PC-9 (cell line): ENCODE measurements at regions of chr15 and their contacts with region 1.

Region 1: DNA sequence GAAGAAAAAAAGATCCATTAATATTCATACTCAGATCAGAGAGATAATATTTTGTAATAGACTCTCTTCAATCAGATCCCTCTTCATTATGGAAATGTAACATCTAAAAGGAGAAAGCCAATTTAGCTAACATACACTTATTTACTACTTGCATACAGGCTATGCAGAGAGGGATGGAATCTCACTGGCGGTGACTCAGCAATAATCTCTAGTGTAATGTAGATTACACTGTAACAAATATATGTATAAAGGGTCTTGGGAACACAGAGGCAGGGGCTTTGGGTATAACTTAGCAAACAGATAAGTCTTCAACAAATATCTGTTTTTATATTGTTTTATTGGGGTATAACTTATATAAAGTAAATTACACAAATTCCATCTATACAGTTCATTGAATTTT is 69.6 kb downstream of the CGNL1 start:
- DNase-seq: no peak
- H3K4me3 ChIP-seq: no peak overlapping the region
- H3K27ac ChIP-seq: peak overlapping the region; percentile 42
- H3K4me1 ChIP-seq: peaks cover 13% of the 10 kb centered on the region
- H3K27me3 ChIP-seq: no peaks in the 10 kb centered on the region
- CTCF ChIP-seq: no peak

Region 2: GRCh38 chr15:57138349-57138788 is 307.5 kb before region 1 on chr15:
- CTCF ChIA-PET with region 1: no interaction called
- POLR2A ChIA-PET with region 1: no interaction called
- intact Hi-C with region 1: no loop called
- DNase-seq: peak in 1 of 2 experiments; percentile 9
- H3K4me3 ChIP-seq: no peak overlapping the region
- H3K27ac ChIP-seq: no peak overlapping the region
- H3K4me1 ChIP-seq: no peaks in the 10 kb centered on the region
- H3K27me3 ChIP-seq: no peaks in the 10 kb centered on the region
- CTCF ChIP-seq: peak; percentile 74

Region 3: GRCh38 chr15:57385923-57386390 is 59.9 kb before region 1 on chr15:
- CTCF ChIA-PET with region 1: interaction called, 3 read pairs
- POLR2A ChIA-PET with region 1: interaction called, 13 read pairs
- intact Hi-C with region 1: no loop called
- DNase-seq: no peak
- H3K4me3 ChIP-seq: no peak overlapping the region
- H3K27ac ChIP-seq: no peak overlapping the region
- H3K4me1 ChIP-seq: no peaks in the 10 kb centered on the region
- H3K27me3 ChIP-seq: no peaks in the 10 kb centered on the region
- CTCF ChIP-seq: no peak

Region 4: GRCh38 chr15:57495041-57495440 is 49.2 kb after region 1 on chr15:
- CTCF ChIA-PET with region 1: no interaction called
- POLR2A ChIA-PET with region 1: interaction called, 17 read pairs
- intact Hi-C with region 1: loop called (anchors 10 kb)
- DNase-seq: no peak
- H3K4me3 ChIP-seq: no peak overlapping the region
- H3K27ac ChIP-seq: no peak overlapping the region
- H3K4me1 ChIP-seq: no peaks in the 10 kb centered on the region
- H3K27me3 ChIP-seq: no peaks in the 10 kb centered on the region
- CTCF ChIP-seq: no peak

Region 5: GRCh38 chr15:57890351-57890750 is 444.5 kb after region 1 on chr15:
- CTCF ChIA-PET with region 1: no interaction called
- POLR2A ChIA-PET with region 1: no interaction called
- intact Hi-C with region 1: no loop called
- DNase-seq: no peak
- H3K4me3 ChIP-seq: no peak overlapping the region
- H3K27ac ChIP-seq: no peak overlapping the region
- H3K4me1 ChIP-seq: no peaks in the 10 kb centered on the region
- H3K27me3 ChIP-seq: 0 out of 2 replicates have a peak, but pooled peaks cover 7% of the 10 kb centered on the region
- CTCF ChIP-seq: no peak